Right ventricle myocardium inferior (tissue), 1 donor: ENCODE measurements at regions of chr4 and their contacts with region 1.

Region 1: GRCh38 chr4:124060261-124060918 is 652.1 kb downstream of the ANKRD50 start:
- DNase-seq: no peak
- ATAC-seq: peak; percentile 91

Region 2: GRCh38 chr4:123776254-123776653 is 284.1 kb before region 1 on chr4:
- intact Hi-C with region 1: no loop called
- DNase-seq: no peak
- ATAC-seq: no peak

Region 3: GRCh38 chr4:124018383-124019317 is 41.7 kb before region 1 on chr4:
- intact Hi-C with region 1: loop called (anchors 5 kb)
- DNase-seq: peak; percentile 65
- ATAC-seq: peak; percentile 95

Region 4: GRCh38 chr4:124030160-124030561 is 30.2 kb before region 1 on chr4:
- intact Hi-C with region 1: loop called (anchors 2 kb)
- DNase-seq: no peak
- ATAC-seq: peak; percentile 97

Region 5: DNA sequence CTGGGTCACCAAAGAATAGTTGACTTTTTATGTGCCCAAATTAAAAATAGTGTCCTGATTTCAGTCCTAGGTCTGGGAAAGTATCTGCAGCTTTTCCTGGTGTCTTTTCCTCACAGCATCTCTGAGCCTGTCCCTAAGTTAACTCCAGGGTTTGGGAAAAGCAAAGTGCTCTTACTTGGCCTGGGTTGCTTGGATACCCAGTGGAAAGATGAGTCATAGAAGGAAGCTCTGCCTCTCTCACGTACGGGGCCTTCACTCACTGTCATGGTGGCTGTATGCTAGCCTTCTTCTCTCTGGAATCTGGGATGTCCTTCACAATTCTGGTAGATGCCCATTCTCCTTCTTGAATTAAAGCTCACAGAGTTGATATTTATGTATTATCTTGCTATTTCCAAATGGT is 44.8 kb after region 1 on chr4:
- intact Hi-C with region 1: loop called (anchors 5 kb)
- DNase-seq: no peak
- ATAC-seq: no peak